Activated CD4-positive, alpha-beta T cell treated with anti-CD3 and anti-CD28 coated beads, Interleukin-2, amount 10 ng/mL, durations not matched to agents 7 days and 5 days (primary cell): ENCODE measurements at regions of chr7 and their contacts with region 1.

Region 1: GRCh38 chr7:139109188-139109982 is at the start of gene ZC3HAV1:
- DNase-seq: peak; percentile 94
- H3K4me3 Mint-ChIP-seq: peak within 1 kb of the TSS; percentile 95
- H3K27ac Mint-ChIP-seq: peak within 1 kb of the TSS; percentile 97
- H3K4me1 Mint-ChIP-seq: peaks cover 38% of the 10 kb centered on the region
- H3K27me3 Mint-ChIP-seq: no peaks in the 10 kb centered on the region
- total RNA-seq, gene ZC3HAV1: 124 to 129 TPM

Region 2: DNA sequence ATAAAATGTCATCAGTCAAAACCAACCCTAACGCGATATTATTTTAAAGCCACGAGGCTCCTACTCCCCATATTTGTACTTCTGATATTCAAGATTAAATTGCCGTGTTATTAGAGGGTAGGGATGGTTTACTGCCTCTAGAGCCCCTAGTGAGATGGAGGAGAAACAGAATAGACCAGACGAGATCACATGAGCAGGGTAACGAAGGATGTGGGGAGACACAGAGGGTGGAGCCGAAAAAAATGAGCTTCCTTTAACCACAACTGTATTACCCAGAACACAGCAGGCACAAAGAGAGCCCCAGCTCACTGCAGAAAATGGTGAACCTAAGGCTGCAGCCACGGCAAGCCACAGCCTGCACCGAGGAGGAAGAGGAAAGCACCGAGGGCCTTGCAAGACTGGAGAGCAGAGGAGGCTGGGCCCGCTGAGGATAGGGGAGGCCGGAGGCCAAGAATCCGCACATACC is 14.2 kb before region 1 on chr7:
- CTCF ChIA-PET with region 1: interaction called, 15 read pairs
- POLR2A ChIA-PET with region 1: interaction called, 24 read pairs
- DNase-seq: peak; percentile 91
- H3K4me3 Mint-ChIP-seq: peak overlapping the region; percentile 75
- H3K27ac Mint-ChIP-seq: peak overlapping the region; percentile 91
- H3K4me1 Mint-ChIP-seq: peaks cover 89% of the 10 kb centered on the region
- H3K27me3 Mint-ChIP-seq: no peaks in the 10 kb centered on the region